Left colon (tissue), 2 donors: ENCODE measurements at regions of chr3 and their contacts with region 1.

Region 1: GRCh38 chr3:14921078-14921616 is 26.2 kb upstream of the NR2C2 start:
- DNase-seq: peak; percentile 58 to 88
- ATAC-seq: peak; percentile 91

Region 2: GRCh38 chr3:14565868-14566588 is 355.1 kb before region 1 on chr3:
- intact Hi-C with region 1: no loop called
- DNase-seq: no peak
- ATAC-seq: no peak

Region 3: GRCh38 chr3:14672588-14672987 is 248.6 kb before region 1 on chr3:
- intact Hi-C with region 1: loop called in 1 of 2 experiments (anchors 2 kb)
- DNase-seq: no peak
- ATAC-seq: no peak

Region 4: GRCh38 chr3:14791343-14791945 is 129.7 kb before region 1 on chr3:
- intact Hi-C with region 1: loop called (anchors 5 to 10 kb)
- DNase-seq: peak; percentile 53 to 78
- ATAC-seq: peak; percentile 92

Region 5: DNA sequence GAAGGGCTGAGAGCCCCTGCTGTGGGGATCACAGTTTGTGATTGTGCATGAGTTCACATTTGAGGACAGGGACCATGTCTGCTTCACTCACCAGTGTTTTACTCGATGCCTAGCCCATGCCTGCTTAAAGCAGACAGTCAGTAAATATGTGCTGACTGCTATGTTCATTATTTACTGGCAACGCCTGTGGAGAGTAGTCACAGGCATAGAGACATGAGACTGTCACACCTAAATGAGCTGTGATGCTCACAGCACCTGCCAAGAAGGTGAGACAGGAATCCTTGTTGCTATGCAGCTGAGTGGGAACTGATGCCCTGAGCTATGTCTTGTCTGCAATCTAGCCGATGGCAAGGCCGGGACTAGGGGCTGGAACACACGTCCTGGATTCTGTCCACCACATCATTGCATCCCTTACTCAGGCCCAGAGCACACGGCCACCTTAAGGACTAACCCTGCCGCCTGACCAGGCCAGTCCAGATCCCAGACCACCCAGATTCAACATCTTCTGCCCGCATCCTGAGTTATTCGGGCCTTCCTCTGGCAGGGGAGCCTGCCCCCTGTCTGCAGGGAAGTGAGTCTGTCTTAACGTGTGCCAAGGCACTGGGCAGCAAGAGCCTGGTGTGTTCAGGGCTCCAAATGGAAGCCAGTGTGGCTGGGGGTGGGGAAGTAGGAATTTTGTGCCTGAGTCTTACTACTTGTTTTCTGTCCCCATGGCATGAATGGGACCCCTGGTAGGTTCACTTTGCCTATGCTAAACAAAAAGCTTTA is 57.6 kb before region 1 on chr3:
- intact Hi-C with region 1: no loop called
- DNase-seq: no peak
- ATAC-seq: no peak